Sigmoid colon (tissue), 7 donors: ENCODE measurements at regions of chr10 and their contacts with region 1.

Region 1: DNA sequence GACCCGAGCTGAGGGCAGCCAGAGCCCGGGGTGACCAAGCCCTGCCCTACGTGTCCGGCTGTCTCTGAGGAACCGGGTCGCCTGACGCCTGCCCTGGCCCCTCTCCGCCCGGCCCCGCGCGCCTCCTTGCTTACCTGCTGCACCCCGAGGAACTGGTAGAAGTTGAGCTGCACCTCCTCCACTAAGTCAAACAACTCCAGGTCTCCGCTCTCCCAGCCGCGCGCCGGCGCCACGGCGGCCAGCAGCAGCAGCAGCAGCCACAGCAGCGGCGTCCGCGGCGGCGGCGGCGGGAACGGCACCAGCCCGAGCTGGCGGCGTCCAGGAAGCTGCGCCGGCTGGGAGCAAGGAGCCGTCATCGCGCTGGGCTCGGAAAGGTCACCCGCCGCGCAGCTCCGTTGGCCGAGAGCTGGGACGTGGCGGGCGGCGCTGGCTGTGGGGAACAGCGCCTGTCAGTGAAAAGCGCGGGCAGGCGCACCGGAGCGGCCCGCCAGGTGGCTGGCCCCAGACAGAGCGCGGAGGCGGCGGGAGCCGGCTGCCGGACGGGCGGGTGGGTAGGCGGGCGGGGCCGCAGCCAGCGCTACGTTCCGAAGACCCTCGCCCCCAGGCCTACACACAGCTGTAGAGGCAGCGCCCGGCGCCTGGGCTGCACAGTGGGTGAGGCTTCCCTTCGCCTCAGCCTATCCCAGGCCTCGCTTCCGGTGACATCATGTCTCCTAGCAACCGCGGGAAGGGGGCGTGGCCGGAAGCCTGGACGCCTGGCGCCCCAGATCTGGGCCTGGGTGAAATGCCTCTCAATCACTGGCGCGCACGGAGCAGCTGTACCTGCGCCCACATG is at the start of gene DNAJC1:
- DNase-seq: peak; percentile 98
- H3K4me3 ChIP-seq: peak within 1 kb of the TSS; percentile 73 to 91 (median 86)
- H3K27ac ChIP-seq: peak within 1 kb of the TSS; percentile 94 to 97 (median 97)
- H3K4me1 ChIP-seq: peaks cover 0 to 28% (median 19%) of the 10 kb centered on the region in 4 donors
- H3K27me3 ChIP-seq: no peaks in the 10 kb centered on the region
- CTCF ChIP-seq: no peak
- EP300 ChIP-seq: no peak
- POLR2A ChIP-seq: peak; percentile 68 to 69
- total RNA-seq, gene DNAJC1: 51.9 to 135 (median 74.3) TPM

Region 2: GRCh38 chr10:21533467-21534279 is 469.6 kb before region 1 on chr10 and contains the start of gene MLLT10:
- intact Hi-C with region 1: loop called (anchors 10 kb)
- DNase-seq: peak; percentile 97
- H3K4me3 ChIP-seq: peak within 1 kb of the TSS; percentile 66 to 93 (median 92)
- H3K27ac ChIP-seq: peak within 1 kb of the TSS; percentile 95 to 99 (median 97)
- H3K4me1 ChIP-seq: peaks cover 0 to 56% (median 26%) of the 10 kb centered on the region in 4 donors
- H3K27me3 ChIP-seq: no peaks in the 10 kb centered on the region
- CTCF ChIP-seq: peak in 3 of 4 experiments; percentile 38 to 69 (median 55)
- EP300 ChIP-seq: no peak
- POLR2A ChIP-seq: peak; percentile 59 to 76
- total RNA-seq, gene MLLT10: 36.0 to 53.7 (median 45.1) TPM

Region 3: DNA sequence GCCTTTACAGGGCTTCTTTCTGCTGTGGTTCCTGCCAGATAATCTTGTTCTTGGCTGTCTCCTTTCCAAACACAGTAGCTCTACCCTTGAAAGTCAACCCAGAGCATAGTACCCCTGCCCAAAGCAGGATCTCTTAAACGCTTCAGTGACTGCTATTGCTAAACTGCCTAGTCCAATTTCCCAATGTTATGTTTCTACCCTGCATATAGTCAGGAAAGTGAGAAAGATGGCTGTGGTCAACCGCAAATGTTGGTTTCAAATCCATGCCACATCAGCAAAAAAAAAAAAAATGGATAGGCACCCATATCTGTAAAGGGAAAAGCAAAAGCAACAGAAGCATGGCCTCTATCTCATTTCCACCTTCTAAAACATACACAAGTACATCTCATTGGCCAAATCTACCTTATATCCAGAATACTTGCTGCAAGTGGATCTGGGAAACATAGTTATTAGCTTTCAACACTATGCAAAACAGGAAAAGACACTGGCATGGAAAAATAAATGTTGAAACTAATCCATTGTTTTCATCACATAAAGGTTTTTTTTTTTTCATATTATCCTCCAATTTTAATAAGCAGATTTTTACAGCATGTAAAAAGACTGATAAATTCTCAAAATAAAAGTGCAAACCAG is 59.5 kb before region 1 on chr10:
- intact Hi-C with region 1: no loop called
- DNase-seq: no peak
- H3K4me3 ChIP-seq: no peak overlapping the region
- H3K27ac ChIP-seq: no peak overlapping the region
- H3K4me1 ChIP-seq: peaks cover 0 to 5% (median 4%) of the 10 kb centered on the region in 4 donors
- H3K27me3 ChIP-seq: no peaks in the 10 kb centered on the region
- CTCF ChIP-seq: no peak
- EP300 ChIP-seq: no peak
- POLR2A ChIP-seq: no peak

Region 4: GRCh38 chr10:22316285-22317120 is 313.2 kb after region 1 on chr10 and contains the start of gene COMMD3:
- intact Hi-C with region 1: loop called (anchors 5 kb)
- DNase-seq: peak; percentile 96
- H3K4me3 ChIP-seq: peak within 1 kb of the TSS; percentile 69 to 87 (median 78)
- H3K27ac ChIP-seq: peak within 1 kb of the TSS; percentile 94 to 96 (median 96)
- H3K4me1 ChIP-seq: peaks cover 0 to 38% (median 24%) of the 10 kb centered on the region in 4 donors
- H3K27me3 ChIP-seq: no peaks in the 10 kb centered on the region
- CTCF ChIP-seq: no peak
- EP300 ChIP-seq: no peak
- POLR2A ChIP-seq: peak; percentile 52 to 66
- total RNA-seq, gene COMMD3: 45.3 to 80.1 (median 61.6) TPM

Region 5: DNA sequence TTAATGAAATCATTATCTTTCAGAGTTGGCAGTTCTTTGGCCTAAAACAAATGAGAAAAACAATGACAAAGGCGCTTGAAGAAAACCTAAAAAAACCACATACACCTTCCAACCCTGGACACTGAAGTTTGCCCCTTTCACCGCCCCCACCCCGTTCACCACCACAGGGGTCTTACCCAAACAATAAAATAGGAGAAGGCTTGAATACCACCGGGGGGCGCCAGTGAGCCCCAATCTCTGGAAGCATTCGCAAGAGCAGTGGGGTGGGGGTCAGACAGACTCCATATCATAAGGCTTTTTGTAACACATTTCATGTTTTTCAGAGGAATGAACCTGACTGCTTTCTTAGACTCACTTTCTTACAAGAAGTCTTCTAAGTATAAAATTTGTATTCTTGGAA is 547.4 kb after region 1 on chr10:
- intact Hi-C with region 1: loop called (anchors 5 kb)
- DNase-seq: no peak
- H3K4me3 ChIP-seq: no peak overlapping the region
- H3K27ac ChIP-seq: no peak overlapping the region
- H3K4me1 ChIP-seq: peaks cover 0 to 14% (median 6%) of the 10 kb centered on the region in 4 donors
- H3K27me3 ChIP-seq: no peaks in the 10 kb centered on the region
- CTCF ChIP-seq: peak in 3 of 4 experiments; percentile 10 to 45 (median 28)
- EP300 ChIP-seq: no peak
- POLR2A ChIP-seq: no peak

Region 6: GRCh38 chr10:23067939-23068775 is 1064.9 kb after region 1 on chr10:
- intact Hi-C with region 1: loop called (anchors 5 kb)
- DNase-seq: peak; percentile 90
- H3K4me3 ChIP-seq: no peak overlapping the region
- H3K27ac ChIP-seq: peak overlapping the region in 1 of 4 donors; percentile 29
- H3K4me1 ChIP-seq: peaks cover 0 to 36% (median 30%) of the 10 kb centered on the region in 4 donors
- H3K27me3 ChIP-seq: no peaks in the 10 kb centered on the region
- CTCF ChIP-seq: peak; percentile 26 to 82 (median 60)
- EP300 ChIP-seq: no peak
- POLR2A ChIP-seq: no peak